Psoas muscle (tissue), 8 donors: ENCODE measurements at regions of chr3 and their contacts with region 1.

Region 1: GRCh38 chr3:148971401-148972163 is 19.8 kb upstream of the GYG1 start:
- DNase-seq: no peak
- ATAC-seq: no peak
- H3K4me3 ChIP-seq: no peak overlapping the region
- H3K27ac ChIP-seq: no peak overlapping the region
- H3K4me1 ChIP-seq: peaks cover 9% of the 10 kb centered on the region
- H3K27me3 ChIP-seq: no peaks in the 10 kb centered on the region
- CTCF ChIP-seq: no peak

Region 2: DNA sequence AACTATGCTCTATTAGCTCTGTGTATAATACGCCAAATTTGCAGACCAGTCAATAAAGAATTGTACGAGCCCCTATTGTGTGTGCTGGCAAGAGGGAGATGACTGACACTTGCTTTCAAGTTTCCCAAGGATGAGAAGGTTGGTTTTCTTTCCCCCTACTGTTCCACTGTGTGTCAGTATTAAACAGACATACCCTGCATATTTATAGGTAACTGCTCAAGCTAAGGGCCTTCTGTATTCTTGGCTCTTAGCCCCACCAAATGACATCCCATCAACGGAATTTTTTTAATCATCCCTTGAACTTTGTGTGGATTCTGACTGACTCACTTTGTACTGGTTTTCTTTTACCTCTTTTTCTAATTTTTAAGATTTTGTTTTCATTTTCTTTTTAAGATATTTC is 40.8 kb before region 1 on chr3:
- intact Hi-C with region 1: no loop called
- DNase-seq: no peak
- ATAC-seq: no peak
- H3K4me3 ChIP-seq: no peak overlapping the region
- H3K27ac ChIP-seq: no peak overlapping the region
- H3K4me1 ChIP-seq: peaks cover 6% of the 10 kb centered on the region
- H3K27me3 ChIP-seq: no peaks in the 10 kb centered on the region
- CTCF ChIP-seq: no peak

Region 3: DNA sequence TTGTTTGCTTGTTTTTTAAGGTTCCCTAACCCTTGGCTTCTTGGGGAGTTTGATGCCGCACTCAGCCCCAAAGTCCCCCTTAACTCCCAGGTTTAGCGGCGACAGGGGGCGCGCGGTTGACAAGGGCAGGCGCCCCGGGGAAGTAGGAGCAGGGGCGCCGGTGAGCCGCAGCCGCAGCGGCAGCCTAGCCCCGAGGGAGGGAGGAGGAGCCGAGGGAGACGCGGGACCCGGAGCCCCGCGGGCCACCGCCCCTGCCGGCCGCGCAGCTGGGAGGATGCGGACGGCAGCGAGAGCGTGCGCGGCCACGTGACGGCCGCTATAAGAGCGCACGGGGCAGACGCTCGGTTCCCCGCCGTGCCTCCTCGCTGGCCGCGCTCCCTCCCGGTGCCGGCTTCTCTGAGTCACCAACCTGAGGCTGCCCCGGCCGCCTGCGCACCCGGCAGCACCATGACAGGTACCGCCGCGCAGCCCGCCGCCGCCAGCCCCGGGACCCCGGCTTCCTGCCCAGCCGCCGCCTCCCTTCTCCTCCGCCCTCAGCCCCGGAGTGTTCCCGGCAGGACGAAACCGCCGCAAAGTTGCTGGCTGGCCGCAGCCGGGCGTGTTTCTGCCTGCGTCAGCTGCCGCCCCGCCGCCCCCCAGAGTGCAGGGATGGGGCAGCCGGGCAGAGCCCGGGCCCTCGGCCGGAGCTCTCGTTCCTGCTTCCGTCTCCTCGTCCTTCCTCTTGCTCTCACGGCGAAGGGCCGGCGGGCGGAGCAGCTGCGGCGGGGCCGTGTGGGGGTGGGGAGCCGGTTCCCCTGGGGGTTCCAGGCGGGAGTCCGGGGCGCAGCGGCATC is 19.8 kb after region 1 on chr3 and contains the start of gene GYG1:
- intact Hi-C with region 1: loop called in 1 of 2 experiments (anchors 1 kb)
- DNase-seq: peak; percentile 90 to 94
- ATAC-seq: peak; percentile 90 to 94 (median 92)
- H3K4me3 ChIP-seq: peak within 1 kb of the TSS; percentile 95
- H3K27ac ChIP-seq: peak within 1 kb of the TSS; percentile 100
- H3K4me1 ChIP-seq: peaks cover 35% of the 10 kb centered on the region
- H3K27me3 ChIP-seq: no peaks in the 10 kb centered on the region
- CTCF ChIP-seq: peak; percentile 33
- total RNA-seq, gene GYG1: 305 to 550 (median 419) TPM

Region 4: DNA sequence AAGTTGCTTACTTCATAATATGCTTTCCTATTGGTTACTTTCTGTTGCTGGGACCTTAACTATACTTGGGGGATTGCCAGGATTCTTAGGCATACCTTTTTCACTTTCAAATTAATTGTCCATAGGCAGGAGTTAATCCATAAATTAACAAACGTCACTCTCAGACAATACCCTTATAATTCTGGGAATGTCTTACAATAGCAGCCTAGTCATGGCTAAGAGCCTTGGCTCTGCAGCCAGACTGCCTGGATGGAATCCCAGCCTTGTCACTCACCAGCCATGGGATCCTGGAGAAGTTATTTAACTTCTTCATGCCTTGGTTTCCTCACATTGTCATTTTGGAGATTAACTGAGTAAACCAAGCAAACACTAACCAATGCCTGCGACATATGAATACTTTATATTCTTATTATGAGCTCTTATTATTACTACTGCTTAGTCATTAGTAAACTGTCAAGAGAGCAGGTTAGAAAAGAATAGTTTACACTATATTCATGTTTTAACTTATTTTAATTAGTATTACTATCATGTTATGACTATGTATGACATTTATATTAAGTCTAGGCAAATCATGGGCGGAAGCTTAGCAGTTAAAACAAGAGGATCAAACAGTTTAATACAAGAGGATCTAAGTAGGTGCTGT is 48.7 kb after region 1 on chr3:
- intact Hi-C with region 1: loop called in 1 of 2 experiments (anchors 5 kb)
- DNase-seq: peak; percentile 25 to 67
- ATAC-seq: peak in 2 of 4 donors; percentile 41 to 42
- H3K4me3 ChIP-seq: no peak overlapping the region
- H3K27ac ChIP-seq: peak overlapping the region; percentile 92
- H3K4me1 ChIP-seq: peaks cover 70% of the 10 kb centered on the region
- H3K27me3 ChIP-seq: no peaks in the 10 kb centered on the region
- CTCF ChIP-seq: no peak

Region 5: GRCh38 chr3:149086232-149086988 is 114.8 kb after region 1 on chr3 and contains the start of gene HLTF:
- intact Hi-C with region 1: loop called in 1 of 2 experiments (anchors 10 kb)
- DNase-seq: peak; percentile 94
- ATAC-seq: peak; percentile 99 to 100 (median 99)
- H3K4me3 ChIP-seq: peak within 1 kb of the TSS; percentile 80
- H3K27ac ChIP-seq: peak within 1 kb of the TSS; percentile 56
- H3K4me1 ChIP-seq: peaks cover 7% of the 10 kb centered on the region
- H3K27me3 ChIP-seq: no peaks in the 10 kb centered on the region
- CTCF ChIP-seq: no peak
- total RNA-seq, gene HLTF: 5.0 to 10.1 (median 8.9) TPM